B cell (primary cell): ENCODE measurements at regions of chr1 and their contacts with region 1.

Region 1: DNA sequence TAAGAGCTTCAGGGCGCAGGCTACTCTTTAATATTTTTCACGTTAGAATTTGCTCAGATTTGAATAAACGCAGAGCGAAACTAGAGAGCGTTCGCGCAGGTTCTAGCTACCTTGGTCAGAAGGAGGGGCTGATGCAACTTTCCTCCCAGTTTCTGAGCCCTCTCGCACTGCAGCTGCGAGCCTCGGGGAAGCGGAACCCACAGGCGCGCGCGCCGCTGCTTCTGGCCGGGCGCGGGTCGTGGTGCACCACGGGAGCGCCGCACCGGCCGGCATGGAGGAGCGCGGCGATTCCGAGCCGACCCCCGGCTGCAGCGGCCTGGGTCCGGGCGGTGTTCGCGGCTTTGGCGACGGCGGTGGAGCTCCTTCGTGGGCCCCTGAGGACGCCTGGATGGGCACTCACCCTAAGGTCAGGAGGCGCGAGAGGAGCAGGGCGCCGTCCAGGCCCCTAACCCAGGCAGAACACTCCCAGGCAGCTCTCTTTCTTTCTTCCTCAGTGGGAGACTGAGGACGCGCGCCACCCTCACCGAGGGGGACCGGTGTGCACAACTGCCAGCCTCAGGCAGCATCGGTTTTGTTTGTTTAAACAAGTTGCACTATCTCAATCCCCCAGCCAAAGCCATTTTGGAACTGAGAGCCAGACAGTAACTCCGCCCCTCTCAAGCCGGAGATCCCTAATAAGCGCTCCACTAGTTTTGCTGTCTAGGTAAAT is at the start of gene TSEN15:
- DNase-seq: peak; percentile 83
- ATAC-seq: peak; percentile 95
- H3K4me3 ChIP-seq: peak within 1 kb of the TSS; percentile 84 to 93 (median 89)
- H3K4me3 Mint-ChIP-seq: peak within 1 kb of the TSS; percentile 99
- H3K27ac ChIP-seq: peak within 1 kb of the TSS; percentile 50 to 80
- H3K27ac Mint-ChIP-seq: peak within 1 kb of the TSS; percentile 93
- H3K4me1 ChIP-seq: peaks cover 15% of the 10 kb centered on the region in 2 donors
- H3K4me1 Mint-ChIP-seq: peaks cover 31% of the 10 kb centered on the region
- H3K27me3 ChIP-seq: peaks cover 0 to 9% (median 2%) of the 10 kb centered on the region in 4 experiments
- H3K27me3 Mint-ChIP-seq: peaks cover 25% of the 10 kb centered on the region
- CTCF ChIP-seq: no peak
- total RNA-seq, gene TSEN15: 25.2 and 30.5 TPM in 2 replicates

Region 2: DNA sequence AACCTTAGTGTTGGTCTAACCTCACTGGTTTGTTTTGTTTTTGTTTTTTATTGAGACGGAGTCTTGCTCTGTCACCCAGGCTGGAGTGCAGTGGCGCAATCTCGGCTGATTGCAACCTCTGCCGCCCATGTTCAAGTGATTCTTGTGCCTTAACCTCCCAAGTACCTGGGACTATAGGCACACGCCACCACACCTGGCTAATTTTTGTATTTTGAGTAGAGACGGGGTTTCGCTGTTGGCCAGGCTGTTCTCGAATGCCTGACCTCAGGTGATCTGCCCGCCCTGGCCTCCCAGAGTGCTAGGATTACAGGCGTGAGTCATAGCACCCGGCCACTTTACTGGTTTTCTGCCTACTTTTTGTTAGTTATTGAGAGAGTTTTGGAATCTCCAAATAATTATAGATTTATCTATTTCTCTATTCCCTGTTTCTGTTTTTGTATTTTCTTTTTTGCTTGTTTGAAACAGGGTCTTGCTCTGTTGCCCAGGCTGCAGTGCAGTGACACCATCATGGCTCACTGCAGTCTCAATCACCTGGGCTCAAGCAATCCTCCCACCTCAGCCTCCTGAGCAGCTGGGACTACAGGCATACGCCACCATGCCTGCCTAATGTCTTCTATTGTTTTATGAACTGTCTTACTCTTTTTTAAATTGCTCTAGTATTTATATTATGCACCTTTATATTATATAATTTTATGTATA is 557.9 kb before region 1 on chr1:
- CTCF ChIA-PET with region 1: no interaction called
- POLR2A ChIA-PET with region 1: interaction called, 10 read pairs
- intact Hi-C with region 1: no loop called
- DNase-seq: no peak
- ATAC-seq: no peak
- H3K4me3 ChIP-seq: no peak overlapping the region
- H3K4me3 Mint-ChIP-seq: no peak overlapping the region
- H3K27ac ChIP-seq: no peak overlapping the region
- H3K27ac Mint-ChIP-seq: no peak overlapping the region
- H3K4me1 ChIP-seq: peaks cover 10 to 13% of the 10 kb centered on the region in 2 donors
- H3K4me1 Mint-ChIP-seq: peaks cover 50% of the 10 kb centered on the region
- H3K27me3 ChIP-seq: no peaks in the 10 kb centered on the region
- H3K27me3 Mint-ChIP-seq: no peaks in the 10 kb centered on the region
- CTCF ChIP-seq: no peak

Region 3: GRCh38 chr1:183956559-183957188 is 95.0 kb before region 1 on chr1:
- CTCF ChIA-PET with region 1: no interaction called
- POLR2A ChIA-PET with region 1: no interaction called
- intact Hi-C with region 1: loop called (anchors 5 kb)
- DNase-seq: peak; percentile 65
- ATAC-seq: peak; percentile 98
- H3K4me3 ChIP-seq: no peak overlapping the region
- H3K4me3 Mint-ChIP-seq: no peak overlapping the region
- H3K27ac ChIP-seq: no peak overlapping the region
- H3K27ac Mint-ChIP-seq: peak overlapping the region; percentile 85
- H3K4me1 ChIP-seq: peaks cover 8 to 9% of the 10 kb centered on the region in 2 donors
- H3K4me1 Mint-ChIP-seq: peaks cover 7% of the 10 kb centered on the region
- H3K27me3 ChIP-seq: peaks cover 0 to 2% (median 0%) of the 10 kb centered on the region in 4 experiments
- H3K27me3 Mint-ChIP-seq: peaks cover 9% of the 10 kb centered on the region
- CTCF ChIP-seq: no peak

Region 4: GRCh38 chr1:184014271-184014670 is 37.4 kb before region 1 on chr1:
- CTCF ChIA-PET with region 1: no interaction called
- POLR2A ChIA-PET with region 1: no interaction called
- intact Hi-C with region 1: no loop called
- DNase-seq: no peak
- ATAC-seq: no peak
- H3K4me3 ChIP-seq: no peak overlapping the region
- H3K4me3 Mint-ChIP-seq: no peak overlapping the region
- H3K27ac ChIP-seq: no peak overlapping the region
- H3K27ac Mint-ChIP-seq: no peak overlapping the region
- H3K4me1 ChIP-seq: no peaks in the 10 kb centered on the region
- H3K4me1 Mint-ChIP-seq: no peaks in the 10 kb centered on the region
- H3K27me3 ChIP-seq: peaks cover 0 to 14% (median 4%) of the 10 kb centered on the region in 4 experiments
- H3K27me3 Mint-ChIP-seq: peaks cover 39% of the 10 kb centered on the region
- CTCF ChIP-seq: no peak

Region 5: DNA sequence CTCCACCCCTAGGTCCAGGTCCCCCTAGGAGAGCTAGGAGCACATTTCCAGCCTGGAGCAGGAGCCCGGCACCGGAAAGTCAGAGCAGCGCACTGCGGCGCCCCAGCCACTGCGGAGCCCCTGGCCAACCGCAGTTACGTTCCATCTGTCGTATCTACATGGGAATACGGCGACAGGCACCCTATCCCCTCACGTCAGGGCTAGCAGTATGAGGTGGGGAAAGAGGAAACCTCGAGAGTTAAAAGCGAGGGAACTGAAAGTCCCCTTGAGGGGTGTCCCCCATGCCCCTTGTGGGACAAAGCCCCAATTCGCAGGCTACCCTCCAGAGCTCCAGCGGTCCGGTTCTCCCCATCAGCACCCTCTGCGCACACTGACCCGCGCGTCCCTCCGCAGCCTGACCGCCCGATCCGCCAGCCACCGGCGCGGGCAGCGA is 15.1 kb before region 1 on chr1:
- CTCF ChIA-PET with region 1: interaction called, 3 read pairs
- POLR2A ChIA-PET with region 1: no interaction called
- intact Hi-C with region 1: loop called (anchors 2 kb)
- DNase-seq: peak; percentile 37
- ATAC-seq: no peak
- H3K4me3 ChIP-seq: peak overlapping the region; percentile 4 to 60 (median 46)
- H3K4me3 Mint-ChIP-seq: peak overlapping the region; percentile 69
- H3K27ac ChIP-seq: no peak overlapping the region
- H3K27ac Mint-ChIP-seq: no peak overlapping the region
- H3K4me1 ChIP-seq: peaks cover 16 to 19% of the 10 kb centered on the region in 2 donors
- H3K4me1 Mint-ChIP-seq: peaks cover 13% of the 10 kb centered on the region
- H3K27me3 ChIP-seq: peaks cover 3 to 51% (median 40%) of the 10 kb centered on the region in 4 experiments
- H3K27me3 Mint-ChIP-seq: peaks cover 71% of the 10 kb centered on the region
- CTCF ChIP-seq: no peak

Region 6: DNA sequence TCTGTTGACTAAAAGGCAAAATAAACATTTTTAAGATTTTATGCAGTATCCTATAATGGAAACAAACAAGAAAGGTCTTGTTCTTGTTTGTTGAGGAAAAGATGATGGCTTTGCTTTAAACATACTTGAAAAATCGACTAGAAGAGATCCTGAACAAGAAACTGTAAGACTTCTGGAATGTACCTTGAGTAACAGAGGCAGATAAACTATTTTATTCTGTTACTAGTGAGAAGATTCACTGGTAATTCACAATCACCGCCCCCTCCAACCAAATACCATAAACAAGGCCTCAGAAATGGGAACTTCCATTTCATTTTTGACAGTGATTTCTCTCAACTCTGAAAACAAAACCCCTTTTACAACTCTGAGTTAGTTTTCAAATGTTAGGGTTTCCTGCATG is 18.0 kb after region 1 on chr1:
- CTCF ChIA-PET with region 1: no interaction called
- POLR2A ChIA-PET with region 1: no interaction called
- intact Hi-C with region 1: no loop called
- DNase-seq: no peak
- ATAC-seq: no peak
- H3K4me3 ChIP-seq: no peak overlapping the region
- H3K4me3 Mint-ChIP-seq: no peak overlapping the region
- H3K27ac ChIP-seq: no peak overlapping the region
- H3K27ac Mint-ChIP-seq: no peak overlapping the region
- H3K4me1 ChIP-seq: no peaks in the 10 kb centered on the region
- H3K4me1 Mint-ChIP-seq: no peaks in the 10 kb centered on the region
- H3K27me3 ChIP-seq: no peaks in the 10 kb centered on the region
- H3K27me3 Mint-ChIP-seq: no peaks in the 10 kb centered on the region
- CTCF ChIP-seq: no peak

Region 7: GRCh38 chr1:184118046-184118445 is 66.4 kb after region 1 on chr1:
- CTCF ChIA-PET with region 1: no interaction called
- POLR2A ChIA-PET with region 1: no interaction called
- intact Hi-C with region 1: no loop called
- DNase-seq: no peak
- ATAC-seq: no peak
- H3K4me3 ChIP-seq: no peak overlapping the region
- H3K4me3 Mint-ChIP-seq: no peak overlapping the region
- H3K27ac ChIP-seq: no peak overlapping the region
- H3K27ac Mint-ChIP-seq: no peak overlapping the region
- H3K4me1 ChIP-seq: no peaks in the 10 kb centered on the region
- H3K4me1 Mint-ChIP-seq: no peaks in the 10 kb centered on the region
- H3K27me3 ChIP-seq: no peaks in the 10 kb centered on the region
- H3K27me3 Mint-ChIP-seq: no peaks in the 10 kb centered on the region
- CTCF ChIP-seq: no peak